ENCODE measurements at regions of chr7 and their contacts with region 1.

Region 1: DNA sequence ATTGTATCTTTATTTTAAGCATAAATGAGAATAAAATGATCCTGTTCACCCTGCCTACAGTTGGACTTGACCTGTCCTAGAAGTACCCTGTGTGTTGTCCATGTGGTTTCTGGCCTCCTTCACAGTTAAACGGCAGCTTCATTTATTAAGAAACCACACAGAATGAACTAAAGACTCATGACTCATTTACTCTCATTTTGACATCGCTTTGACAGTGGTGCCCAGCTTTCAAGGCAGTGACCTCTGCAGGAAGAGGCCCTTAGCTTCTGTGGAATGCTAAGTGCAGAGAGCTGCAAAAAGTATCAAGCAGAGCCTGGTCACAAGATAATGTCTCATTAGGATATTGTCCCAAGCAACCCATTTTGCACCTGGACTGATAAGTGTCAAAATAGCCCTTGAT is 93.4 kb downstream of the AVL9 start:
- DNase-seq: no peak
- H3K4me3 ChIP-seq: no peak overlapping the region
- H3K27ac ChIP-seq: no peak overlapping the region
- H3K4me1 ChIP-seq: peaks cover 24% of the 10 kb centered on the region
- H3K27me3 ChIP-seq: no peaks in the 10 kb centered on the region
- CTCF ChIP-seq: no peak

Region 2: DNA sequence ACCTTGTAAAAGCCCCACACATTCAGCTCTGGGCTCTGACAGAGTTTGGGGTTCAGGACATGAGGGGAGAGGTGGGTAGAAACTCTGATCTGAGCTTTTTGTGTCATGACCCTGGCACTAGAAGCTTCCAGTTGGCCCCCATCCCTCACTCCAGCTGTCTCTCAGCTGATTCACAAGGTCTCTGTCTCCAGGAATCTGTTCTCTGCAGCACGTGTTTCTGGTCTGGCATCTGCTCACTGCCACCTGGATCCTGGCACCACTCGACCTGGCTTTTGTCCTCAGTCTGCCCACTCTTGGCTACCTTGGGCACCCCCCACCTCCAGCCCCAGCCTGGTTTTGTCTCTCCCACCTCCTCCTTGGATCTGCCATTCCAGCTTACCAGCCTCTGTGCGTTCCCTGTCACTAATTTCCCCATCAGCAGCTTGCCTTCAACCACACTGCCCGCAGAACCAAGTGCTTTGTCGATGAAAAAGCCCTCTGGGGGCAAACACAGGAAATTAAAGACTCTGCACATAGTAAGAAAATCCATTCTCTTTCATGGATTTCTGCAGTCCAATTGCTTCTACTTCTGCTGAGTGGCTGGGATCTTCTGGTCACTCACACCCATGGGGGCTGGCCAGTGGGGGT is 1554.9 kb before region 1 on chr7:
- CTCF ChIA-PET with region 1: no interaction called
- POLR2A ChIA-PET with region 1: no interaction called
- intact Hi-C with region 1: no loop called
- DNase-seq: no peak
- H3K4me3 ChIP-seq: no peak overlapping the region
- H3K27ac ChIP-seq: no peak overlapping the region
- H3K4me1 ChIP-seq: no peaks in the 10 kb centered on the region
- H3K27me3 ChIP-seq: no peaks in the 10 kb centered on the region
- CTCF ChIP-seq: no peak

Region 3: GRCh38 chr7:32495298-32496176 is 93.1 kb before region 1 on chr7 and contains the start of gene AVL9:
- CTCF ChIA-PET with region 1: no interaction called
- POLR2A ChIA-PET with region 1: no interaction called
- intact Hi-C with region 1: loop called (anchors 10 kb)
- DNase-seq: peak; percentile 97
- H3K4me3 ChIP-seq: peak within 1 kb of the TSS; percentile 81
- H3K27ac ChIP-seq: peak within 1 kb of the TSS; percentile 89
- H3K4me1 ChIP-seq: peaks cover 5% of the 10 kb centered on the region
- H3K27me3 ChIP-seq: no peaks in the 10 kb centered on the region
- CTCF ChIP-seq: no peak
- total RNA-seq, gene AVL9: 36.1 and 40.3 TPM in 2 replicates

Region 4: GRCh38 chr7:32602470-32602869 is 13.8 kb after region 1 on chr7:
- CTCF ChIA-PET with region 1: no interaction called
- POLR2A ChIA-PET with region 1: no interaction called
- intact Hi-C with region 1: loop called (anchors 1 kb)
- DNase-seq: no peak
- H3K4me3 ChIP-seq: no peak overlapping the region
- H3K27ac ChIP-seq: no peak overlapping the region
- H3K4me1 ChIP-seq: no peaks in the 10 kb centered on the region
- H3K27me3 ChIP-seq: no peaks in the 10 kb centered on the region
- CTCF ChIP-seq: no peak